MCF 10A (cell line): ENCODE measurements at regions of chr7 and their contacts with region 1.

Region 1: GRCh38 chr7:151782598-151783448 is 94.1 kb downstream of the PRKAG2 start:
- DNase-seq: peak; percentile 52
- H3K4me3 Mint-ChIP-seq: peak overlapping the region; percentile 27
- H3K27ac Mint-ChIP-seq: no peak overlapping the region
- H3K4me1 Mint-ChIP-seq: no peaks in the 10 kb centered on the region
- H3K27me3 Mint-ChIP-seq: peaks cover 14% of the 10 kb centered on the region
- CTCF ChIP-seq: peak; percentile 84

Region 2: GRCh38 chr7:151769188-151769841 is 13.5 kb before region 1 on chr7:
- CTCF ChIA-PET with region 1: interaction called, 26 read pairs
- POLR2A ChIA-PET with region 1: interaction called, 3 read pairs
- intact Hi-C with region 1: no loop called
- DNase-seq: no peak
- H3K4me3 Mint-ChIP-seq: no peak overlapping the region
- H3K27ac Mint-ChIP-seq: no peak overlapping the region
- H3K4me1 Mint-ChIP-seq: peaks cover 5% of the 10 kb centered on the region
- H3K27me3 Mint-ChIP-seq: peaks cover 14% of the 10 kb centered on the region
- CTCF ChIP-seq: no peak

Region 3: DNA sequence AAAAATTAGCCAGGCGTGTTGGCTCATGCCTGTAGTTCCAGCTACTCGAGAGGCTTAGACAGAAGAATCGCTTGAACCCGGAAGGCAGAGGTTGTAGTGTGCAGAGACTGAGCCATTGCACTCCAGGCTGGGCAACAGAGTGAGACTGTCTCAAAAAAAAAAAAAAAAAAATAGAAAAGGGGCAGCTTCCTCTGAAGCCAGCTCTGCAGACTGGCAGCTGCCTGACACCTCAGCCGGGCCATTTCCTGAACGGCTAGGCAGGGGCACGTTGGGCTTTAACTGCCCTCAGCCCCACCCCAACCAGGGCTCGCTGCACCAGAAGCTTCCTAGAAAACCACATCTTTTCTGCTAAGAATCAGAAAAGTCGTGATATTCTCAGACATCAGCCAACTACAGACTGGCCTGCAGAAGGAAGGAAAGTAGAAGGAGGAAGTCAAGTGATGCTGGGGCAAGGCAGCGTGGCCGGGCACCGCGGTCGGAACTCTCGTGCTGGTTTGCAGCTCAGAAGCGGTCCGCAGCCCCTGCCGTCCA is 56.1 kb after region 1 on chr7:
- CTCF ChIA-PET with region 1: interaction called, 12 read pairs
- POLR2A ChIA-PET with region 1: no interaction called
- intact Hi-C with region 1: no loop called
- DNase-seq: no peak
- H3K4me3 Mint-ChIP-seq: no peak overlapping the region
- H3K27ac Mint-ChIP-seq: no peak overlapping the region
- H3K4me1 Mint-ChIP-seq: no peaks in the 10 kb centered on the region
- H3K27me3 Mint-ChIP-seq: no peaks in the 10 kb centered on the region
- CTCF ChIP-seq: no peak

Region 4: DNA sequence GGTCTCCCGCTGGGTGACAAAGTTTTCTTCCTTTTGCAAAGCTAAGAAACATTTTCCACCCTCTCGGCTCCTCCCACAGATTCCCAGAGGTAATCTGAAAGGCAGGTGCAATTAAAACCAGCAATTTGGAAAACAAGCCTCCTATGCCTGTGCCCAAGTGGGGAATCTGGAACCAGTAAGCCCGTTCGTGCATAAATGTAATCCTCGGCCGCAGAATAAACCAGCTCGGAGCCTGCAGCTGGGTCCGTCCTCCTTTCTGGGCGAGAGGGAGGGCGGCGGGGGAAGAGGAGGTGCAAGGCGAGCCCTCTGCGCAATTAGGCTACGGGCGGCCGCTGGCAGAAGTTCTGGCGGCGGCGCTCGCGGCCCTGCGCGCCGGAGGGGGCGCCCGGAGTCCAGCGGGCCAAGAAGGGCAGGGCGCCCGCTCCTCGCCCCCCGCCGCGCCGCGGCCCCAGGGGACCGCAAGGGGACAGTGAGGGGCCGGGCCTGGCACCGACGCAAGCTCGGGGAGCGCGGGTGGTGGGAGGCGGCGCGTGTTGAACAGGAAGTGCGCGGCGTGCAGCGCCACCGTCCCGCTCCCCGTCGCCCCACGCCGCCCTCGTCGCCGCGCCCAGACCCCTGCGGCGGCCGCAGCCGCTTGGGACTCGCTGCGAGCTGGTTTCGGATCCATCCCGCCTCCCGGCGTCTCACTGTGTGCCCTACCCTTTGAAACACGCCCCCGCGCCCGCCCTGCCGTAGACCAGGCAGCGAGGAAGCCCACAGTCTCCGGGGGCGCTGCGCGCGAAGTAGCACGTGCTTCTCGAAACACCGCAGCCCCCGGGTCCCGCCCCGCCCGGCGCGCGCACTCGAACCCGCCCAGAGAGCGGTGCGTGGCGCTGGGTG is 94.3 kb after region 1 on chr7 and contains the start of gene PRKAG2:
- CTCF ChIA-PET with region 1: interaction called, 17 read pairs
- POLR2A ChIA-PET with region 1: no interaction called
- intact Hi-C with region 1: loop called (anchors 2 kb)
- DNase-seq: peak; percentile 75
- H3K4me3 Mint-ChIP-seq: peak within 1 kb of the TSS; percentile 88
- H3K27ac Mint-ChIP-seq: no peak within 1 kb of the TSS
- H3K4me1 Mint-ChIP-seq: no peaks in the 10 kb centered on the region
- H3K27me3 Mint-ChIP-seq: peaks cover under 1% of the 10 kb centered on the region
- CTCF ChIP-seq: no peak
- total RNA-seq, gene PRKAG2: 62.5 and 73.9 TPM in 2 replicates

Region 5: GRCh38 chr7:151936207-151936606 is 153.4 kb after region 1 on chr7:
- CTCF ChIA-PET with region 1: interaction called, 84 read pairs
- POLR2A ChIA-PET with region 1: interaction called, 5 read pairs
- intact Hi-C with region 1: loop called (anchors 1 kb)
- DNase-seq: no peak
- H3K4me3 Mint-ChIP-seq: no peak overlapping the region
- H3K27ac Mint-ChIP-seq: no peak overlapping the region
- H3K4me1 Mint-ChIP-seq: peaks cover 23% of the 10 kb centered on the region
- H3K27me3 Mint-ChIP-seq: peaks cover 35% of the 10 kb centered on the region
- CTCF ChIP-seq: no peak